Activated CD4-positive, alpha-beta memory T cell treated with anti-CD3 and anti-CD28 coated beads for 36 hours (primary cell): ENCODE measurements at regions of chr7 and their contacts with region 1.

Region 1: DNA sequence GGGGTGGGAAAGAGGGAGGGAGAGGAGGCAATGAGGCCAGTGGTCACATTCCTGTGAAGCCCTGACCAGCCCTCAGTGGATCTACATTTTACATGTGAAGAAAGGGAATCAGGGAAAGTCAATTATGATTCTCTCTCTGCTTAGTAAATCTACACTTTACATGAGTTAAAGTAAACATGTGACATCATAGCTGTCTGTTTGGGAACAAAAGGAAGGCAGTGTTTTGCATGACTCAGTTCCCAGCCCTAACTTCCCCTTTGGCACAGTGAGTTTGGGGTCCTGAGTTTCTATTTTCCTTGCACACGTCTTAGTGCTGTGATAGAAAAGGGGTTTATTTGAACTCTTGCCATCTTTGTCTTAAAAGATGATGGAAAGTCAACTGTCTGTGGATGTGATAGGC is 615.1 kb downstream of the SDK1 start:
- DNase-seq: no peak
- H3K4me3 Mint-ChIP-seq: no peak overlapping the region
- H3K27ac Mint-ChIP-seq: no peak overlapping the region
- H3K4me1 Mint-ChIP-seq: peaks cover 6% of the 10 kb centered on the region
- H3K27me3 Mint-ChIP-seq: peaks cover 4% of the 10 kb centered on the region

Region 2: GRCh38 chr7:3859436-3859835 is 56.7 kb before region 1 on chr7:
- CTCF ChIA-PET with region 1: no interaction called
- POLR2A ChIA-PET with region 1: no interaction called
- intact Hi-C with region 1: loop called (anchors 10 kb)
- DNase-seq: no peak
- H3K4me3 Mint-ChIP-seq: no peak overlapping the region
- H3K27ac Mint-ChIP-seq: no peak overlapping the region
- H3K4me1 Mint-ChIP-seq: peaks cover 6% of the 10 kb centered on the region
- H3K27me3 Mint-ChIP-seq: peaks cover 2% of the 10 kb centered on the region

Region 3: GRCh38 chr7:3965794-3966395 is 49.7 kb after region 1 on chr7:
- CTCF ChIA-PET with region 1: no interaction called
- POLR2A ChIA-PET with region 1: no interaction called
- intact Hi-C with region 1: no loop called
- DNase-seq: no peak
- H3K4me3 Mint-ChIP-seq: no peak overlapping the region
- H3K27ac Mint-ChIP-seq: no peak overlapping the region
- H3K4me1 Mint-ChIP-seq: no peaks in the 10 kb centered on the region
- H3K27me3 Mint-ChIP-seq: peaks cover 5% of the 10 kb centered on the region